ENCODE measurements at regions of chr9 and their contacts with region 1.

Region 1: GRCh38 chr9:110217656-110218099 is 9.7 kb upstream of the C9orf152 start:
- DNase-seq: peak; percentile 9
- H3K4me3 ChIP-seq: no peak overlapping the region
- H3K27me3 ChIP-seq: no peaks in the 10 kb centered on the region
- CTCF ChIP-seq: peak; percentile 73

Region 2: DNA sequence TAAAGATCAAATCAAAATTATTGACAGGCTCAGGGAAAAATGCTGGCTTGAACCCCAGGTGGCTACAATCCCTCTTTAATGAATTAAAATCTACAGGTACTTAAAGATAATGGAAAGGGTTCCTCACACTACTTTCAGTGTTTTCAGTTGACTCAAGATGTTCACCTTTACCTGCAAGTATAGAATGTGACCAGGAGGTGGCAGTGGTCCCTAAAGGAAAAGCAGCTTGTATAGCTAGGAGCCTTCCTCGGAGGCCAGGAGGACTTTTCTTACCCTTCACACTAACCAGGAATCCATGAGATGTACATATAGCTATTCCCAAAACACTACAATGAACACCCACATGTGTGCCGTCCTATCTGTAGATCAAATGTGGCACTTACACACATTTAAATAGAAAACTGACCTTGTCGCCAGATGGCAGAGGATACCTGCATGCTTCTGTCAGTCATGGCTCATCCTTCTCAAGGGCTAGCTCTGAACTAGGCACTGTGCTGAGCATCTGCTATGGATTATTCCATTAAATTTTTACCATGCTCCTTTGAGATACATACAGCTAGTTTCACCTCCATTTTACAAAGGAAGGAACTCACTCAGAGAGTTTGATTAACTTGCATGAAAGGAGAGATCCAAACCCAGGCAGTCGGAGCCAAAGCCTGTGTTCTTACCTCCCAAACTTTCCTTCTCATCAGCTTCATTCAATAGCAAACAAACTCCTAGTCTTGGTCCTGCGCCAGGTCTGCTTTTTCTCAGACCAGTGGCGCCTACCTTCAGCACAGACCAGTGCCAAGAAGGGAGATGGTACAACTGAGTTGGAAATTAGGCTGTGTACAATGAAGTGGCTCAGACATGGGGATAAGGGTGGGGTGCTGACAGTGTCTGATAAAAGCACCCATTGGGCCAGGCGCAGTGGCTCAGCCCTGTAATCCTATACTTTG is 34.2 kb before region 1 on chr9:
- CTCF ChIA-PET with region 1: interaction called, 166 read pairs
- POLR2A ChIA-PET with region 1: no interaction called
- DNase-seq: no peak
- H3K4me3 ChIP-seq: no peak overlapping the region
- H3K27me3 ChIP-seq: no peaks in the 10 kb centered on the region
- CTCF ChIP-seq: peak; percentile 73

Region 3: GRCh38 chr9:110192531-110193261 is 25.0 kb before region 1 on chr9:
- CTCF ChIA-PET with region 1: interaction called, 166 read pairs
- POLR2A ChIA-PET with region 1: interaction called, 3 read pairs
- DNase-seq: peak; percentile 99
- H3K4me3 ChIP-seq: no peak overlapping the region
- H3K27me3 ChIP-seq: no peaks in the 10 kb centered on the region
- CTCF ChIP-seq: no peak

Region 4: DNA sequence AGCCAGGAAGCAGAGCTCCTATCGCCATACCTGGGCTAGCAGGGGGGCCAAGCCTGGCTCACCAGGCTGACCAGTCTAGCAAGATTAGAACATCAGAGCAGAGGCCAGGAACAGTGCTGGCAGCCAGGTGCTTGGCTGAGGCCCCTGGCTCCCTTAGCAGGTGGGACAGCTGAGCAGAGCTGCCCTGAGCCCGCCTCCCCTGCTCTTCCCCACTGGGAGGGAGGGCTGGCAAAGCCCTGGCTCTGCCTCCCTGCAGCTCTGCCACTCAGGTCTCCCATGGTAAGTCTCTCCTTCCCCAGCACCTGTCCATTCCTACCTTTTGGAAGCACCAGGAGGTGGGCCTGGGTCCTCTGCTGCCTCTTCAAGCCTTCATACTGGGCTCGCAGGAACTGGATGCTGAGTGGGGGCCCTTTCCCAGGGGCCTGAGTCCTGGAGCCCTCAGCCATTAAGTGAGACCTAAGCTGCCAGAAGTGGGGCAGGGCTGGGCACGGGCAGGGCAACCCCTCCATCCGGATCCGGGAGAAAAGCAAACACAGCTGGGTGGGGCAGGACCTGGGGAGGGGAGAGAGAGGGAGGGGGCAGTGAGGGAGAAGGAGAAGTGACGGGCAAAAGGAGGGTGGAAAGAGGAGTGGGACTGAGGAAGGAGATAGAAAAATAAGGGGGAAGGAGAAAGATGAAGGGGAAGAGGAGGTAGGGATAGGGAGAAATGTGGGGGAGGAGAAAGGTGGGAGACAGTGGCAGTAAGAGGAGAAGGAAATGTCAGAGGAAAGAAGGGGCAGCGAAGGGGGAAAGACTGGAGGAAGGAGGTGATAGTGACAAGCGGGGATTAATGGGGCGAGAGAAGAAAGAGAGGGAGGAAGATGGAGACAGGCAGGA is 10.4 kb before region 1 on chr9:
- CTCF ChIA-PET with region 1: interaction called, 21 read pairs
- POLR2A ChIA-PET with region 1: no interaction called
- DNase-seq: no peak
- H3K4me3 ChIP-seq: no peak overlapping the region
- H3K27me3 ChIP-seq: peaks cover 6% of the 10 kb centered on the region
- CTCF ChIP-seq: no peak

Measured in BJ (cell line).